ENCODE measurements at regions of chr13 and their contacts with region 1.

Region 1: GRCh38 chr13:44373601-44374348 is at the start of gene SERP2:
- DNase-seq: peak; percentile 41 to 46
- ATAC-seq: peak; percentile 65 to 90 (median 76)
- H3K4me3 ChIP-seq: peak within 1 kb of the TSS; percentile 56 to 78 (median 74)
- H3K27ac ChIP-seq: peak within 1 kb of the TSS; percentile 22 to 79 (median 55)
- H3K4me1 ChIP-seq: peaks cover 0 to 15% (median 8%) of the 10 kb centered on the region in 9 donors
- H3K27me3 ChIP-seq: peaks cover 0 to 24% (median 0%) of the 10 kb centered on the region in 7 donors
- CTCF ChIP-seq: no peak
- total RNA-seq, gene SERP2: 10.0 to 18.6 (median 11.8) TPM

Region 2: DNA sequence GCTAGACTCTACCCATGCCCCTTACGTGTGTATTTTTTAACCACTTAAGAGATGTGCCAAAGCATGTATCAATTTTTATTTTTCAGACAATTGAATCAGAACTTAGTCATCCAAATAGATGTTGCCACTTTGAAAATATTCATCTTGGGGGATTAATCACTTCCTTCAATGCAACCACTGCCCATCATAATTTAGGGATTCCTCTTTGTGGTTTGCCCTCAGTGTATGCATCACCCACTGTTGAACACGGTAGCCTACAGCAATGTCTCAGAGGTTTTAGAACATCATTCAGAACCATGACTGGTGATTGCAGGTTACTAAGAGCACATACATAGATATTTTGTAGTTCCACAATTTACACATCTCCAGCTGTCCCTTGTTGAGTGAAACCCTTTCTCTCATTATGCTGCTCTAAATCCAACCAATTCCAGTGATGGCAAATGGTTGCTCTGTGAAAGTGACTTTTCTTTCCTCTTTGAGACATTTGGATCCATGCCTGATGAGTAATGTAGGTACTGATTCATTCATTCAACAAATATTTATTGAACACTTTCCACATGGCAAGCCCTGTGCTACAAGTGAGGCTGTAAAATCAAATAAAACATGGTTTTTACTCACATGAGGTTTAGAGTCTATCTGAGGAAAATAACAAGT is 60.8 kb before region 1 on chr13:
- intact Hi-C with region 1: loop called in 1 of 10 experiments (anchors 5 kb)
- DNase-seq: no peak
- ATAC-seq: no peak
- H3K4me3 ChIP-seq: no peak overlapping the region
- H3K27ac ChIP-seq: peak overlapping the region in 1 of 10 donors; percentile 1
- H3K4me1 ChIP-seq: peaks cover 0 to 36% (median 7%) of the 10 kb centered on the region in 9 donors
- H3K27me3 ChIP-seq: no peaks in the 10 kb centered on the region
- CTCF ChIP-seq: no peak

Region 3: DNA sequence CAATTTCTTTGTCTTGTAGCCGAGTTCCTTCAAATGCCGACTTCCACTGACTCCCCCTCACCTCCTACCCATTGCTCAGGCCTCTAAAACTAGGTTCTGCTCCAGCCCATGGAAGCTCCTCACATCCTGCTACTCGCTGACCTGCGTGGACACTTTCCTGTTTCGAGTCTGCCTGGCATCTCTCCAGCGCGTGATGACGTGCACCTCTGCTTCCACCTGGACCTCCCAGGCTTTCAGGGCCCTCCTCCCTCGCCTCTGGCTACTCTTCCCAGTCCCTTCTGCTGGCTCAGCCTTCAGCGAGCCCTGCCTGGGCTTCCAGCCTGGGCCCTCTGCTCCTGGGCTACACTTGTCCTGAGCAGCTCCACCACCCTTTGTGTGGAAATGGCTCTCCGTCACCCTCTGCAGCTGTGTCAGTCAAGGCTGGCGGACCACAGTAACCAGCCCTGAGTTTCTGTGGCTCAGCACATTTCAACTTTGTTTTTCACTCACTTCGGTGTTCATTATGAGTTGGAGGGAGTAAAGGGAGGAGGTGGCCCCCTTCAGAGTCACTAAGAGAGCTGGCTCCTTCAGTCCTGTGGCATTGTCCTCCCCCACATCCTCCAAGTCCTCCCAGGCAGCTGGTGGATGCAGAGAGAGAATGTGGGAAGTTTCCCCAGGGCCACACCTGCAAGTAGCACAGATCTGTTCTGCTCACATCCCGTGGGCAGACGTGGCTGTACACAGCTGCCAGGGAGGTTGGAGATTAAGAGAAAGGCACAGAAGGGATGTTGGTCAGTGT is 49.2 kb after region 1 on chr13:
- intact Hi-C with region 1: no loop called
- DNase-seq: peak; percentile 34 to 72
- ATAC-seq: peak; percentile 30 to 92 (median 72)
- H3K4me3 ChIP-seq: no peak overlapping the region
- H3K27ac ChIP-seq: peak overlapping the region in 5 of 10 donors; percentile 26 to 47 (median 38)
- H3K4me1 ChIP-seq: peaks cover 0 to 18% (median 6%) of the 10 kb centered on the region in 9 donors
- H3K27me3 ChIP-seq: no peaks in the 10 kb centered on the region
- CTCF ChIP-seq: no peak

Measured in heart right ventricle (tissue), 16 donors.